Heart right ventricle (tissue), 16 donors: ENCODE measurements at regions of chr9 and their contacts with region 1.

Region 1: GRCh38 chr9:15306757-15307534 is at the start of gene TTC39B:
- DNase-seq: peak; percentile 93
- ATAC-seq: peak; percentile 98 to 99 (median 98)
- H3K4me3 ChIP-seq: peak within 1 kb of the TSS; percentile 68 to 98 (median 81)
- H3K27ac ChIP-seq: peak within 1 kb of the TSS; percentile 22 to 91 (median 78)
- H3K4me1 ChIP-seq: peaks cover 0 to 24% (median 4%) of the 10 kb centered on the region in 9 donors
- H3K27me3 ChIP-seq: peaks cover 0 to 10% (median 0%) of the 10 kb centered on the region in 7 donors
- CTCF ChIP-seq: peak in 5 of 9 donors; percentile 10 to 41 (median 24)
- total RNA-seq, gene TTC39B: 1.1 to 4.3 (median 1.6) TPM

Region 2: DNA sequence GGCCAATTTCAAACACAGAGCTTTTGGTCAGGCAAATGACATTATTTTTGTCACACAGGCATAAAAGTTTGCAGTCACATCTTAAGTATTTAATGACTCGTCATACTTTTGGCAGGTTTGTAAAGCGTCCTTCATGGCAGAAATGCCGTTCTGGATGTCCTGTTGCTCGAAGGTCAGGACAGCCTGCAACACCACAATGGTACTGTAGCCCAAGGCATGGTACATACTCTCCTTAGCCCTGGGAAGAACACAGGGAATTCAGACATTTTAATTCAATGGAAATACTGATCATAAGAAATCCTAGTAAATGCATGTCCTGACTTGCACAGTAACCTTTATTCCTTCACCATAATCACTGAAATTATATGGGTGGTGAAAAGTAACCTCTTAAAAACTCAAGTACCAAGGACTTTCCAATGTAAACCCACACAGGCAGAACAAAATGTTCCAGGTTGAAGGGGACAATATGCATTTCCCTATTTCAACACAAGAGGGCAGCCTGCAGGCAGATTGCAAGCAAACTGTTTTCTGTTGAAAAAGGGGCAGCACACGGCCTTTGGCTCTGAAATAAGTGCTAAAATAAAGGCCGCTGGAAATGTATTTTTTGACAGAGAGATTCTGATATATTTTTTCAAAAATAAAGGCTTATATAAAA is 95.7 kb before region 1 on chr9:
- intact Hi-C with region 1: loop called in 3 of 10 experiments (anchors 2 to 5 kb)
- DNase-seq: peak in 1 of 2 donors; percentile 81
- ATAC-seq: peak in 7 of 8 donors; percentile 55 to 83 (median 65)
- H3K4me3 ChIP-seq: no peak overlapping the region
- H3K27ac ChIP-seq: peak overlapping the region in 1 of 10 donors; percentile 22
- H3K4me1 ChIP-seq: peaks cover 0 to 10% (median 7%) of the 10 kb centered on the region in 9 donors
- H3K27me3 ChIP-seq: no peaks in the 10 kb centered on the region
- CTCF ChIP-seq: peak; percentile 80 to 96 (median 92)

Region 3: GRCh38 chr9:15357050-15357653 is 50.2 kb after region 1 on chr9:
- intact Hi-C with region 1: loop called in 1 of 10 experiments (anchors 10 kb)
- DNase-seq: no peak
- ATAC-seq: no peak
- H3K4me3 ChIP-seq: no peak overlapping the region
- H3K27ac ChIP-seq: no peak overlapping the region
- H3K4me1 ChIP-seq: no peaks in the 10 kb centered on the region
- H3K27me3 ChIP-seq: no peaks in the 10 kb centered on the region
- CTCF ChIP-seq: no peak

Region 4: DNA sequence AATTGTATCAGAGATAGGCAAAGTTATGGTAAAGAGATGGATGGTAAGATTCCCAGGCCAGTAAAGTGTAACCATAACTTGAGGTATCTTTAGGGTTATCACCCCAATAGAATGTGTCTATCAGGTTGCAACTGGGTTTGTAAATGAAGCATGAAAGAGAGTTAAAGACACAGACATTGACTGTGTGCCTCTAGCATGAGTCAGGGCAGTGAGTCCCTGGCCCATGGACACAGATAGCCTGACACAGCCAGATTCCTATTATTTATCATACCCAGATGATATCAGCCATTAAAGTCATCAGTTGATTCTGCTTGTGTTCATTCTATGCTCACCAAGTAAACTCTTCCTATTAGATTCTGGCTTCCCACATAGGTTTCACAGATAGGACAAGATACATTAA is 82.2 kb after region 1 on chr9:
- intact Hi-C with region 1: no loop called
- DNase-seq: no peak
- ATAC-seq: no peak
- H3K4me3 ChIP-seq: no peak overlapping the region
- H3K27ac ChIP-seq: no peak overlapping the region
- H3K4me1 ChIP-seq: no peaks in the 10 kb centered on the region
- H3K27me3 ChIP-seq: no peaks in the 10 kb centered on the region
- CTCF ChIP-seq: no peak

Region 5: DNA sequence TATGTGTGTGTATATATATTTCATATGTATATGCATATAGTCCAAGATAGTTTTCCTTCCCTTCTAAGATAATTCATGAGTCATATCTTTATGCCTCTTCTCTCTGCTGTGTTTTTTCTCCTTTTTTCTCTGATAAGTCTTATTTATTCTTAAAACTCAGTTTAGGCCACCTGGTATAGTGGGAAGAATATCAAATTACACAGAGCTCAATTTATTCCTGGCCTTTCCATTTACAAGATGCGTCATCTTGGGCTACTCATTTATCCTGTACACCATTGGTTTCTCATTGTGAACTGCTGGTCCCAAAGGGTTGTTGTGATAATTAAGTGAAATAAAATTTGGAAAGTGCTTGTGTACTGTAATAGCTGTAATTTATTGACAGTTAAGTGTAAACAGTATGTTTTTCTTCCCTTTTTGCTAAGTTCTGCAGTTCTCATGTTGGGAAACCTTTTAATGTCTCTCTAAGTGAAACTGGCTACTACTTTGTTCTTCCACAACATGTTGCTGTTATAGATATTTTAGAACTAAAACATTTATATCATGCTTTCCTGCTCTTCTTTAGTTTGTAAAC is 265.3 kb after region 1 on chr9:
- intact Hi-C with region 1: loop called in 1 of 10 experiments (anchors 10 kb)
- DNase-seq: no peak
- ATAC-seq: no peak
- H3K4me3 ChIP-seq: no peak overlapping the region
- H3K27ac ChIP-seq: no peak overlapping the region
- H3K4me1 ChIP-seq: no peaks in the 10 kb centered on the region
- H3K27me3 ChIP-seq: no peaks in the 10 kb centered on the region
- CTCF ChIP-seq: no peak